ENCODE measurements at regions of chr2 and their contacts with region 1.

Region 1: DNA sequence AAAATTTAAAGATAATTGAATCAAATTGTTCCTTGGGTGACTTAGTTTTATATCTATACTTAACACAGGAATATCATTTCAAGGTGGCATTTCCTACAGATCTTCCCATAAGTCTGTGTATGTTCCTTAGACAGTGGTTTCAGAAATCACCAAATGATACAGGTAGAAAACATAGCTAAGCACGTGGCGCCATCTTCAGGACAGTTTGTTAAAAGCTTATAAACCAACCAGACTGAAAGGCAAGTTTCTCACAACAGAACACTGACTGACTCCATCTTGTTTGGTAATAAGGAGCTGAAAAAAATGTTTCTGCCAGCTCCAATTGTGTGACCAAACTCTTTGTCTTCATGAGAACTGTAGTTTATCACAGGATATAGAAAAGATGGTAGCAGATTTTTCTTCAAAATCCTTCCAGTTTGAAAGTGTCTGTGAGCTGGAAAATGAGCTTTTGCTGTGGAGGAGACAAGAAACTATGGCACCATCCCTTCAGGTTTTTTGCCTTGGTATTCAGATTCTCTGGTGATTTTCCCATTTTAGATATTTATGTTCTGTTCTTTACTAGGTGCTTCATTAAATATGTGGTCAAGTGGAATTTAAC is 34.8 kb upstream of the NEUROD1 start:
- DNase-seq: peak; percentile 25
- H3K4me3 ChIP-seq: no peak overlapping the region
- H3K27me3 ChIP-seq: no peaks in the 10 kb centered on the region; the same call in 1 of the 2 replicates
- CTCF ChIP-seq: peak; percentile 65

Region 2: DNA sequence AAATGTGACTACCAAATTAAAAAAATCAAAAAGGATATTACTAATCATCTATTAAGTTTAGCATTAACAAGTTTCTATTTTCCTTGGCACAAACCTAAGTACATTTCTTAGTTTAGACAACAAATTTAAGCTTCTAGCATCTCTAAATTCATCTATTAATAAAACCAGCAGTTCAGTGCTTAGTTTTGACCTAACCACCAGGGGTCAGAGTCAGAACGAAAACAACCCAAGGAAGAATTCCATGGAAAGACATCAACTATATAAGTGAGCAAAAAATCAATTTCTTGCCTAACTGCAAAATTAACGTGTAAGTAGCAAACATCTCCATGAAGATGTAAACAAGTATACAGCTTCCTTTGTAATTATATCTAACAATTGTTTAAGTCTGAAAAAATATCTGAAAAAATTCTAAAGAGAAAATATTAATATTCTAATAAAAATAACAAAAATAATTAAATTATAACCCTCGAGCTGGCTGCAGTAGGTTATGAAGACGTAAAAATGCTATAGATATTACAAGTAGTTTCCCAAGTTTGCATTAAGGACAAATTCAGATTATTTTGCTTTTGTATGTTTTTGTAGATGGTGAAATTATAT is 141.9 kb before region 1 on chr2:
- CTCF ChIA-PET with region 1: interaction called, 16 read pairs
- POLR2A ChIA-PET with region 1: no interaction called
- DNase-seq: no peak
- H3K4me3 ChIP-seq: no peak overlapping the region
- H3K27me3 ChIP-seq: peaks cover 4% of the 10 kb centered on the region
- CTCF ChIP-seq: peak; percentile 52

Region 3: DNA sequence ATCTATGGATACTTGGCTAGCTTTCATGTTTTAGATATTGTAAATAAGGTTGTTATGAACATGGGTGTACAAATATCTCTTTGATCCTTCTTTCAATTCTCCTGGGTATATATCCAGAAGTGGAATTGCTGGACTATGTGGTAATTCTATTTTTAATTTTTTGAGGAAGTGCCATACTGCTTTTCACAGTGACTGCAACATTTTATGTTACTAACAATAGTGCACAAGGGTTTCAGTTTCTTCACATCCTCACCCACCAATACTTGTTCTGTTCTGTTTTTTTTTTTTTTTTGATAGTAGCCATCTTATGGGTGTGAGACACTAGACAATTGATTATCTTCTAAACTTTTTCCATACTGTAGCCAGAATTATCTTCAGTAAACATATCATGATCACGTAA is 17.6 kb before region 1 on chr2:
- CTCF ChIA-PET with region 1: no interaction called
- POLR2A ChIA-PET with region 1: no interaction called
- DNase-seq: no peak
- H3K4me3 ChIP-seq: no peak overlapping the region
- H3K27me3 ChIP-seq: peaks cover 2% of the 10 kb centered on the region; the same call in 1 of the 2 replicates
- CTCF ChIP-seq: no peak

Region 4: GRCh38 chr2:181937473-181937872 is 222.3 kb after region 1 on chr2:
- CTCF ChIA-PET with region 1: no interaction called
- POLR2A ChIA-PET with region 1: no interaction called
- DNase-seq: no peak
- H3K4me3 ChIP-seq: no peak overlapping the region
- H3K27me3 ChIP-seq: no peaks in the 10 kb centered on the region
- CTCF ChIP-seq: no peak

Measured in BJ (cell line).